ENCODE measurements at regions of chr17 and their contacts with region 1.

Region 1: GRCh38 chr17:43760254-43760852 is 1.8 kb upstream of the SOST start:
- DNase-seq: peak; percentile 98
- H3K4me3 Mint-ChIP-seq: no peak overlapping the region
- H3K27ac Mint-ChIP-seq: no peak overlapping the region
- H3K4me1 Mint-ChIP-seq: no peaks in the 10 kb centered on the region
- H3K27me3 Mint-ChIP-seq: peaks cover 21% of the 10 kb centered on the region

Region 2: DNA sequence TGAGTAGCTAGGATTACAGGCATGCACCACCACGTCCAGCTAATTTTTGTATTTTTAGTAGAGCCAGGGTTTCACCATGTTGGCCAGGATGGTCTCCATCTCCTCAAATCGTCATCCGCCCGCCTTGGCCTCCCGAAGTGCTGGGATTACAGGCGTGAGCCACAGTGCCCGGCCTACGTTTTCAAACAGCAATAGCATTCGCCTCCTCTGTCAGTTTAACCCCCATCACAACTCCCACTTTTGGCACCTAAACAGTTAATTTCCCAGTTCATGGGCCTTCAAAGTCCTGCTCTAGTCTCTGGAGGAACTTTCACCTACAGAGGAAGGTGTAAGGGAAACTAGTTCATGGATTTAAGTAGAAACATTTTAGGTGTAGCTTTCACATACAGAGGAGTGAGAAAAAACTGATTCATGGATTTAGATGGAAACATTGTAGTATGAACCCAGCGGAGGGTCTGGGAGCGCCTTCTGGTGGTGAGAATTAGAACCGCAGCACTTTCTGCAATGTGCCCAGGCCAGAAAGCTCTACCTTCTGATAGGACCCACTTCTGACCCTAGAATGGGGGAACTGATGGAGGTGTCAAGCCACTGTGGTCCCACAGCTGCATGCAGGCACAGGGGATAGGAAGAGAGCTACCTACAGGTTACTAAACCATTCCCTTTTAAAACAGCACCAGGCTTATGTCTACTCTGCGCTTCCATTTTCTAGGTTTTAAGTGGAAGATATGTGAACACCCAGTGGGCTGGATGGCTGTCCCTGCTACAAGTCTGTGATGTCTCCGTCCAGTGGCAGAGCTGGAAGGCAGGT is 86.6 kb before region 1 on chr17:
- CTCF ChIA-PET with region 1: interaction called, 13 read pairs
- intact Hi-C with region 1: no loop called
- DNase-seq: peak; percentile 87
- H3K4me3 Mint-ChIP-seq: no peak overlapping the region
- H3K27ac Mint-ChIP-seq: no peak overlapping the region
- H3K4me1 Mint-ChIP-seq: peaks cover 19% of the 10 kb centered on the region
- H3K27me3 Mint-ChIP-seq: no peaks in the 10 kb centered on the region

Region 3: DNA sequence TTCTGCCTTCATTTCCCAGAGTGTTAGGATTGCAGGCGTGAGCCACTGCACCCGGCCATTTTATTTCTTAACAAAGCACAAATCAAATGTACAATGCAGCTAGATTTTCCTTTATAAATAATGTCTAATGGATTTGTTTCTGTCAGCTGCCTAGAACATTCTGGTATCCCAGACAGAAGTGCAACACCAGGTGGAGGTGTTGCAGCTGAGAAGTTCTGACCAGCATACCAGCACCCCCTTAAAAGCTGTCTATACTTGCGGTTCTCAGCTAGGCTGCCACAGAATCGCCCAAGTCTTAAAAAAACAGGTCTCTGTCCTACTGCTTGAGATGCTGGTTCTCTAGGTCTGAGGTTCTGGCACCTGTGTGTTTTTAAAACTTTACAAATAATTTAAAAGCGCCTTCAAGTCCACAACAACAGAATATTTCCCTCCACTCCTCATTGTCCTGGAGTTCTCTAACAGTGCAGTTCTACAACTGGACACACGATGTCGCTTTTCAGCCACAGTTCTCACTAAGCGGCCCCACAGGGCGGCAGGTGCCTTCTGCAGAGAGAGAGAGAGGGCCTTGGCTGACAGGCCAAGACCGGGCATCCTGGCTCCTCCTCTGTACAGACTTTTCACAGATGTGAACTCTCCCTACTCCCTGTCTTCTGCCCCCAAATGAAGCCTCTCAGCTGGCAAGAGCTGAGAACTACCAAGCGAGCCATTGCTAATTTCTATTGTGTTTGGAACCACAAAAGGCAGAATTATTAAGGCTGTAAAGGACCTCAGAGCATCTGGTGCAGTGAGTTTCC is 66.1 kb before region 1 on chr17:
- CTCF ChIA-PET with region 1: interaction called, 403 read pairs
- intact Hi-C with region 1: loop called (anchors 1 kb)
- DNase-seq: peak; percentile 87
- H3K4me3 Mint-ChIP-seq: no peak overlapping the region
- H3K27ac Mint-ChIP-seq: no peak overlapping the region
- H3K4me1 Mint-ChIP-seq: no peaks in the 10 kb centered on the region
- H3K27me3 Mint-ChIP-seq: no peaks in the 10 kb centered on the region

Region 4: GRCh38 chr17:43713494-43714162 is 46.7 kb before region 1 on chr17:
- CTCF ChIA-PET with region 1: interaction called, 11 read pairs
- intact Hi-C with region 1: no loop called
- DNase-seq: peak; percentile 19
- H3K4me3 Mint-ChIP-seq: peak overlapping the region; percentile 51
- H3K27ac Mint-ChIP-seq: no peak overlapping the region
- H3K4me1 Mint-ChIP-seq: peaks cover 12% of the 10 kb centered on the region
- H3K27me3 Mint-ChIP-seq: peaks cover 37% of the 10 kb centered on the region

Region 5: DNA sequence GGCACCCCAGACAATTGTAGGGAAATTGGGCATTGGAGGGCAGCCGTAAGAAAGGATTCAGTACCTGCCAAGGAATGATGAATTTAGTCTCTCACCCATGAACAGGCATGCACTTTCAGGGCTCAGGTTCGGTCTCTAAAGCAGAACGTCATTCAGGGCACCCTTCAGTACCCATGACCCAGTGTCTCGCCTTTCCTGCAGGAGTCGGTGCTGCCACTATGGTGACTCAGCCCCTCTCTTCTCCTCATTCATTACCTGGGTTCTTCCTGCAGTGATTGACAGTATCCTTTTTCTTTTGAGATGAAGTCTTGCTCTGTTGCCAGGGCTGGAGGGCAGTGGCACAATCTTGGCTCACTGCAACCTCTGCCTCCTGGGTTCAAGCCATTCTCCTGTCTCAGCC is 10.2 kb before region 1 on chr17:
- CTCF ChIA-PET with region 1: interaction called, 20 read pairs
- intact Hi-C with region 1: no loop called
- DNase-seq: no peak
- H3K4me3 Mint-ChIP-seq: no peak overlapping the region
- H3K27ac Mint-ChIP-seq: no peak overlapping the region
- H3K4me1 Mint-ChIP-seq: no peaks in the 10 kb centered on the region
- H3K27me3 Mint-ChIP-seq: peaks cover 15% of the 10 kb centered on the region

Region 6: GRCh38 chr17:43846221-43846712 is 85.9 kb after region 1 on chr17:
- CTCF ChIA-PET with region 1: interaction called, 18 read pairs
- intact Hi-C with region 1: no loop called
- DNase-seq: peak; percentile 85
- H3K4me3 Mint-ChIP-seq: no peak overlapping the region
- H3K27ac Mint-ChIP-seq: no peak overlapping the region
- H3K4me1 Mint-ChIP-seq: no peaks in the 10 kb centered on the region
- H3K27me3 Mint-ChIP-seq: peaks cover 8% of the 10 kb centered on the region